A673 (cell line): ENCODE measurements at regions of chr7 and their contacts with region 1.

Region 1: GRCh38 chr7:128387216-128388144 is 22.3 kb downstream of the IMPDH1 start:
- DNase-seq: peak; percentile 92
- H3K4me3 ChIP-seq: peak overlapping the region; percentile 5
- H3K27ac ChIP-seq: no peak overlapping the region
- H3K4me1 ChIP-seq: peaks cover 10% of the 10 kb centered on the region
- H3K27me3 ChIP-seq: no peaks in the 10 kb centered on the region
- CTCF ChIP-seq: peak; percentile 94

Region 2: GRCh38 chr7:128335734-128336133 is 51.7 kb before region 1 on chr7:
- CTCF ChIA-PET with region 1: no interaction called
- POLR2A ChIA-PET with region 1: no interaction called
- intact Hi-C with region 1: no loop called
- DNase-seq: no peak
- H3K4me3 ChIP-seq: no peak overlapping the region
- H3K27ac ChIP-seq: no peak overlapping the region
- H3K4me1 ChIP-seq: no peaks in the 10 kb centered on the region
- H3K27me3 ChIP-seq: no peaks in the 10 kb centered on the region
- CTCF ChIP-seq: no peak

Region 3: DNA sequence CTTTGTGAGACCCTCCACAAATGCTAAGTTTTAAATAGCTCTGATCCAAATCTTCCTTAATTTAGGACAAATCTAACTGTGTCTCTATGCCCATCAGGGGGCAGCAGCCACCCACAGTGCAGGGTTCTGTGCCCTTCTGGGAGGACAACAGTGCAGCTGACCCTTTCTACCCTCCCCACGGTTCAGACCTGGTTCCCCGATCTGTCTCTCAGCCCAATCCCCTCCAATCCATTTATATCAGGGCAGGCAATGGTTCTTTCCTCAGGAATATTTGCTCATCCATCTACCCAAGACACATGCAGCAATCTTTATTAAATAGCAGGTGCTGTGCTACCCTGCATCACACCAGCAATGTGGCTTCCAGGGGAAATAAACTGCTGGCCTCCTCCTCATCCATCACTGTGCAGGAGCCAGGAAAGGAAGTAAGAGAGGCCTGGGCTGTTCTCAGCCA is 39.8 kb before region 1 on chr7:
- CTCF ChIA-PET with region 1: interaction called, 36 read pairs
- POLR2A ChIA-PET with region 1: no interaction called
- intact Hi-C with region 1: loop called (anchors 1 kb)
- DNase-seq: peak; percentile 75
- H3K4me3 ChIP-seq: no peak overlapping the region
- H3K27ac ChIP-seq: no peak overlapping the region
- H3K4me1 ChIP-seq: peaks cover 13% of the 10 kb centered on the region
- H3K27me3 ChIP-seq: no peaks in the 10 kb centered on the region
- CTCF ChIP-seq: peak; percentile 74